Lower leg skin (tissue), 4 donors: ENCODE measurements at regions of chr4 and their contacts with region 1.

Region 1: DNA sequence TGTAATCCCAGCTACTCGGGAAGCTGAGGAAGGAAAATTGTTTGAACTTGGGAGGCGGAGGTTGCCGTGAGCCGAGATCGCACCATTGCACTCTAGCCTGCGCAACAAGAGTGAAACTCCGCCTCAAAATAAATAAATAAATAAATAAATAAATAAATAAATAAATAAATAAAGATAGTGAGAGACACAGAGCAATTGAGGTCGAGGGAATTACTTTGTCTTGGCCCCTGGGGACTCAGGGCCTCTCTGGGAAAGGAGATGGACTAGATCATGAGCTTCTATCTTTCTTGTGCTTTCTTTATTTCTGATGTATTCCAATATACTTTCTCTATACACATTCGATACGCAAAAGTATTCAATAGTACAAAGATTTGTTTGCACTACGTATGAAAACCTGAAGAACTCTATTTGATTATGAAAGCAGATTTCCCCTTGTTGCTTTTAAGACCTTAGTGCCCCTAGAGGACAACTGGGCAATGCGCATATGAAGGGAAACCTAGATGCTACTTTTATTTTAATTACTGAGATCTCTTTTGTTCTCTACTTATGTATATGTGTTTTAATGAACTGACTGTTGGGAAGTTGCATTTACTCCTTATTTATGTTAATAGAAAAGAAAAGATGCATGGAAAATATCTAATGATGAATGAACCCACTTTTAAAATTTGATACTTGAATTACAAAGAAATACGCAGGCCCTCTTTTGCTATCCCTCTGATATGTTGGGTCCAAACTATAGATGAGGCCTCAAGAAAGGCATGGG is 12.8 kb upstream of the ELOVL6 start:
- DNase-seq: no peak
- H3K4me3 ChIP-seq: no peak overlapping the region
- CTCF ChIP-seq: no peak
- POLR2A ChIP-seq: no peak

Region 2: DNA sequence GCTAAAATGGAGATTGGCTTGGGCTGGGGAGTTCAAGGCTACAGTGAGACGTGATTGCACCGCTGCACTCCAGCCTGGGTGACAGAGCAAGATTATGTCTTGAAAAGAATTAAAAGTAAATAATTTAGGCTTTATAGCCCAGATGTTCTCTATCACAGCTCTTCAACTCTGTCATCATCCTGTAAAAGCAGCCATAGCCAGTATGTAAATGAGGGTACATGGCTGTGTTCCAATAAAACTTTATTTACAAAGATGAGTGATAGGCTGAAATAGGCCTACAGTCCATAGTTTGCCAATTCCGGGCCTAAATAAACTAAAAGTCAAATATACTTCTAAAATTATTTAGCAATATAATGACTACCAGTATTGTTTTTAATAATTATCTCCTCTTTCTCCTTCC is 374.2 kb before region 1 on chr4:
- intact Hi-C with region 1: no loop called
- DNase-seq: no peak
- H3K4me3 ChIP-seq: no peak overlapping the region
- CTCF ChIP-seq: no peak
- POLR2A ChIP-seq: no peak

Region 3: GRCh38 chr4:110049951-110050925 is 160.9 kb before region 1 on chr4:
- intact Hi-C with region 1: loop called (anchors 10 kb)
- DNase-seq: peak in 1 of 2 donors; percentile 28
- H3K4me3 ChIP-seq: no peak overlapping the region
- CTCF ChIP-seq: no peak
- POLR2A ChIP-seq: no peak